Activated naive CD4-positive, alpha-beta T cell treated with anti-CD3 and anti-CD28 coated beads for 36 hours (primary cell): ENCODE measurements at regions of chr10 and their contacts with region 1.

Region 1: GRCh38 chr10:97714048-97714371 is 480 bp downstream of the MARVELD1 start:
- DNase-seq: peak; percentile 65
- H3K4me3 Mint-ChIP-seq: peak overlapping the region; percentile 94
- H3K27ac Mint-ChIP-seq: no peak overlapping the region
- H3K4me1 Mint-ChIP-seq: peaks cover 11% of the 10 kb centered on the region
- H3K27me3 Mint-ChIP-seq: peaks cover 17% of the 10 kb centered on the region

Region 2: GRCh38 chr10:97128516-97129154 is 585.4 kb before region 1 on chr10:
- CTCF ChIA-PET with region 1: no interaction called
- intact Hi-C with region 1: no loop called
- DNase-seq: no peak
- H3K4me3 Mint-ChIP-seq: no peak overlapping the region
- H3K27ac Mint-ChIP-seq: no peak overlapping the region
- H3K4me1 Mint-ChIP-seq: no peaks in the 10 kb centered on the region
- H3K27me3 Mint-ChIP-seq: no peaks in the 10 kb centered on the region

Region 3: DNA sequence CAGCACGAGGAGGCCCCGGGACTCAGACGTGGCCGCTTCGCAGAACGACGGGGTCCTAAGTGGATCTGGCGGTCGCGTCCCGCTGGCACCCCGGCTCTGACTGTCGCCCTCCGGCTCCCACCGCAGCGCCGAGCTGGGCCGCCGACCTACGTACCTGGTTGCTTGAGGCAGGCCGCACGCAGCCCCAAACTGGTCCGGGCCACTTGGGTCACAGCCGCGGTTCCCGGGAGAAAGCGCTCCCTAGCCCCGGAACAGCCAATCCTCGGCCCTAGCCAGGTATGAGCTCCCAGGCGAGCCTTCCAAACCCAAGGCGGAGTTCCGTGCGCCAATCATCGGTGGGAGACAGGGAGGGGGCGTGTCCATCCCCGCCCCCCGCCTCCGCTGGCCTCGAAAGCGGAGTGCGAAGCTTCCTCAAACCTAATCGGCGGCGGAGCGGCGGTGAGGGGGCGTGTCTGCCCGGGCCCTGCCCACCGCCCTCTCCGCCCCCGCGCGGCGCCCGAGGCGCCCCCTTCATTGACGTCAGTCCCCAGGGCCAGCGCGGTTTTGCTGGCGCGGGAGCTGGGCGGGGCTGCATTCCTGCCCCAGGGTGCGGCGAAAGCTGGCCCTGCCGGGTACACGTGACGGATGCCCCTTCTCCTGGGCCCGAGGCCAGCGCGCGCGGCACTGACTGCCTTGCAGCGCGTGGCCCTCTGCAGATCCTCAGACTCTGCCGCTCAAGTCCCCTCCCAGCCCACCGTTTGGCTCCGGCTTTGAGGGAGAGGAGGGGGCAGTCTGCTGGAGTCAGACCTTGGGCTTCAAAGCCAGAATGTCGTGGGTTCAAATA is 26.8 kb before region 1 on chr10 and contains the start of gene AVPI1:
- CTCF ChIA-PET with region 1: interaction called, 42 read pairs
- intact Hi-C with region 1: loop called (anchors 1 kb)
- DNase-seq: peak; percentile 96
- H3K4me3 Mint-ChIP-seq: peak within 1 kb of the TSS; percentile 81
- H3K27ac Mint-ChIP-seq: no peak within 1 kb of the TSS
- H3K4me1 Mint-ChIP-seq: peaks cover 12% of the 10 kb centered on the region
- H3K27me3 Mint-ChIP-seq: no peaks in the 10 kb centered on the region
- total RNA-seq, gene AVPI1: 1.5 to 1.9 TPM

Region 4: DNA sequence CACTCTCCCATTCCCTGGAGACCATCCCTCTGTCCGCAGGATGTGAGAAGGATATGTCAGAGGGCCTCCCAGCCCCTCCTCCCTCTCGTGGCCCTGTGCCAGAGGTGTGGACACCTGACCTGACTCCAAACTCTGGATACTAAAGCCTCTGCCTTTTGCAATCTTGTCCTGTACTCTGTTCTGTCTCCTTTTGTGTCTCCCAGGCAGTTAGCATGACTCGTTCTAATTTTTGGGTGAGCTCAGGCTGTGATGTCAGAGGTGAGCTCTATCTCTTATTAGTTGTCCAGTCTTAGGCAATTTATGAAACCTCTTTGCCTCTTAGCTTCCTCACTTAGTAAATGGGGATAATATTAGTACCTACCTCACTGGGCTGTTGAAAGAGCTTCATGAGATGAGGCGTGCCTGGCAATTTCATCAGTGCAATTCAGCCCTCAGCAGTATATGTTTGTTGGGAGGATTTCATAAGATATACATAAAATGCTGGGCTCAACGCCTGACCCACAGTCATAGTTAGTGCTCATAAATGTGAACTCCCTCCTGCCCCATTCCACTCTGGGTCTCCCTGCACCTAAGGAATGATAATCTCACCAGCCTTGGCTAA is 10.4 kb after region 1 on chr10:
- CTCF ChIA-PET with region 1: interaction called, 173 read pairs
- intact Hi-C with region 1: no loop called
- DNase-seq: no peak
- H3K4me3 Mint-ChIP-seq: no peak overlapping the region
- H3K27ac Mint-ChIP-seq: no peak overlapping the region
- H3K4me1 Mint-ChIP-seq: no peaks in the 10 kb centered on the region
- H3K27me3 Mint-ChIP-seq: no peaks in the 10 kb centered on the region

Region 5: DNA sequence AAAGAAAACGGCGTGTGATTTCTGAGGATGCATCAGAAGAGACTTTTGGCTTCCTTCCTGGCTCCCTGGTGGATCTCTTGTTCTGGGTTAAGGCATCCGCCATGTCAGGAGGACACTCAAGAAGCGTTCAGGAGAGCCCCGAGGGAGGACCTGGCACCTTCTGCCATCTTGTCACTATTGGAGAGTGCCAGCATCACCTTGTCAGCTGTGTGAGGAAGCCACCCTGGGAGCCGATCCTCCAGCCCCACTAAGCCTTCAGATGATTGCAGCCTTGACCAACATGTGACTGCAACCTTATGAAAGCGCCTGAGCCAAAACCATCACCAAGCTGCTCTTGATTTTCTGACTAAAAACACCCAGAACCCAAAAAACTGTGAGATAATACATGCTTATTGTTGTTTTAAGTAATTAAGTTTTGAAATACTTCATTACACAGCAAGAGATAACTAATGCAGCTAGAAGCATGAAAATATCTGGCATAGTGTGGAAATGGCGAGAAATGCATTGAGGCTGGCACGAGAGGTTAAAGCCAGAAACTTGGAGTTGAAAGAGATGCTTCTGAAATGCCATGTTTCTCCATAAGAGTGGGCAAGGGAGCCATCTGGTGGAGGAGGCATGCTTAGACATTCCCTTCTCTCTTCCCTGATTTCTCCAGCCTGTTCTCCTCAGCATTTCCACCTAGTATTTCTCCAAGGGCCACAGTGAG is 17.5 kb after region 1 on chr10:
- CTCF ChIA-PET with region 1: interaction called, 173 read pairs
- intact Hi-C with region 1: loop called (anchors 1 kb)
- DNase-seq: peak; percentile 79
- H3K4me3 Mint-ChIP-seq: no peak overlapping the region
- H3K27ac Mint-ChIP-seq: no peak overlapping the region
- H3K4me1 Mint-ChIP-seq: peaks cover 6% of the 10 kb centered on the region
- H3K27me3 Mint-ChIP-seq: no peaks in the 10 kb centered on the region

Region 6: DNA sequence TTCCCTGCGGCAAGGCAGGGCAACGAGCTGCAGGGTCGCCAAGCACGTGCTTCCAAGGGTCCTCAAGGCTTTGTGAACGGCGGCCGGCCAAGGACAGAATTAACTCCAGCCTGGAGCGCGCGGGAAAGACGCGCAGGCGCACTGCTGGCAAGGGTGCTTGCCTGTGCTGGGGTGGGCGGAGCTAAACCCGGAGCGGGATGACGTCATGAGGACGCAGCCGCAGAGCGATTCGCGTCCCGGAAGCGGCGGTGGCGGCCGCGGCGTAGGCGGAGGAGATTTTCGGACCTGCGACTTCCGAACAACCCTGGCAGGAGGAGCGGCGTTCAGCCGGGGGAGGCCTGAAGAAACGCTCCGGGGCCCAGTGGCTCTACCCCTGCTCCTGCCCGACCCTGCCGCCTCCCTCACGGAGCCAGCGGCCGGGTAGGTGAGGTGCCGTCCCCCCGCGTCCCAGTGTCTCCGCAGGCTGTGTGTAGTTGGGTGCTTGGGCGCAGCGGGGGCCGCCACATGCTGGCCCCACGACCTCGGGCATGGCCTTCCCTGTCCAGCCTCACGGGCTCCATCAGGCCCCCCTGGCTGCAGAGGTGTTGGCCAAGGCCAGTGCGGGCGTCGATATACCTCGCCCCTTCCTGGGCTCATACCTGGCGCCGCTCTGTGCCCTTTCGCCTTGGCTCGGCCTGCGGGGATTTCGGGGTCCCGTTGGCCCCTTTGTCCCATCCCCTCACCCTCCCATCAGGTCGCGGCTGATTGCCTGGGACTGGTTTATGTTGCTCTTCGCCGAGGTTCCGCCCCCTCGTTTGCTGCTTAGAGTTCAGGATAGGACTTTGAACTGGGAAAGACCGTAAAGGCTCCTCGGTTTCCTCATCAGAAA is 23.1 kb after region 1 on chr10 and contains the start of gene ZFYVE27:
- CTCF ChIA-PET with region 1: interaction called, 173 read pairs
- intact Hi-C with region 1: no loop called
- DNase-seq: peak; percentile 98
- H3K4me3 Mint-ChIP-seq: peak within 1 kb of the TSS; percentile 92
- H3K27ac Mint-ChIP-seq: peak within 1 kb of the TSS; percentile 93
- H3K4me1 Mint-ChIP-seq: peaks cover 44% of the 10 kb centered on the region
- H3K27me3 Mint-ChIP-seq: no peaks in the 10 kb centered on the region
- total RNA-seq, gene ZFYVE27: 18.0 to 18.4 TPM

Region 7: DNA sequence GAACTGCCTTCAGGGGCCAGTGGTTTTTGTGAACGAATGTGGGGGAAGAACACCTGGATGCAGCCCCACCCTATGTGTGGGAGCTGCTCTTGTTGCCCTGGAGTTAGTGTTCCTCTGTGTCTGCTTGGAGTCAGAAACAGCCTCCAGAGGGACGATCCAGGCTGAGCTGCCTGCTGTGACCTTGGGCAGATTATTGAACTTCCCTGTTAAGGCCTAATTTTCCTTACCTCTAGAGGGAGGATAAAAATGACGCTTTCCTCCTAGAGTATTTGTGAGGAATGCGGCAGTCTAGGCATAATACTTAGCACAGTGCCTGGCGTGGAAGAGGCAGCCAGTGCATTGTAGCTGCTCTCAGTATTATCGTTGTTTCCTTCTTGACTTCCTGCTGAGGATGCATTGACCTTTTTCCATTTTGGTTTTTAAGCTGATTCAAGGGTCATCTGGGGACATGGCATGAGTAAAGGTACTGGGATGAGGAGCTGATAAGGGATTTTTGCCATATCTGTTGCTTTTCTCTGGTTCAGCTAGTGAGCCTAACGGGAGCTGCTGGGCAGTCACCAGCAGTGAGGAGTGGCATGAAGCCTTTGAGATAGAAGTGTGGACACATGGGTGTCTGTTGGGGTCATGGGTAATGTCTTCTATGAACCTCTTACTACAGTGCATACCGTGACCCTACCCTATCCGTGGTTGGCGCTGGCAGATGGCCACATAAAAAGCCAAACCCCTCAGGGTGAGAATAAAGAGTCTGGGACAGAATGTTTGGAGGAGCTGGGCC is 29.3 kb after region 1 on chr10:
- CTCF ChIA-PET with region 1: interaction called, 12 read pairs
- intact Hi-C with region 1: no loop called
- DNase-seq: no peak
- H3K4me3 Mint-ChIP-seq: no peak overlapping the region
- H3K27ac Mint-ChIP-seq: no peak overlapping the region
- H3K4me1 Mint-ChIP-seq: peaks cover 31% of the 10 kb centered on the region
- H3K27me3 Mint-ChIP-seq: no peaks in the 10 kb centered on the region

Region 8: DNA sequence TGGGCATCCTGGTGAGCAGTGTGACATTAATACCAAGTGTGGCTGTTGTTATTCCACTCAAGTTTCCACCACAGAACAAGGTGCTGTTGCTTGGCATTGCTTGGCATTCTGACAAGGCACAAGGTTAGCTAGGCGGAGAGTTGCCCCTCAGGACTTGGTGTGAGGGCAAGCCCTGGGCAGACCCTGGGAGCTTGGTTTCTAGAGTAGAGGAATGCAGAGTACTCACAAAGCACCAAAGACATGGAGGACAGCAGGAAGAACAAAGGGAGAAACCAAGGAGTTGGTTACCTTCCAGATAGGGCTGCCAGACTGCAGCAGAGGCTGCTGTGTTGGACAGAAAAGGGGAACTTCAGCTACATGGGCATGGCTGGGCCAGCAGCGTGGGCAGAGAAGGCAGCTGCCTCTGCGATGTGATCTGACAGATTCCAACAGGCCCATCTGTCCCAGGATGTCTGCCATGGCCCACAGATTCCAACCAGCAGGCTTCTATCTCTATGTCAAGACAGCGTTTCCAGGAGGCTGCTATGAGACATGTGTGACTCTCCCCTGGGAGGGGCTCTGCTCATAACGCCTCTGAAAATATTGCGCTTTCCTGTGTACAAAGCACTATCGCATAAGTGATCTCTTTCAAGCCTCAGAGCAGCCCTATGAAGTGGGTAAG is 137.5 kb after region 1 on chr10:
- CTCF ChIA-PET with region 1: no interaction called
- intact Hi-C with region 1: no loop called
- DNase-seq: peak; percentile 63
- H3K4me3 Mint-ChIP-seq: no peak overlapping the region
- H3K27ac Mint-ChIP-seq: no peak overlapping the region
- H3K4me1 Mint-ChIP-seq: peaks cover 34% of the 10 kb centered on the region
- H3K27me3 Mint-ChIP-seq: no peaks in the 10 kb centered on the region

Region 9: DNA sequence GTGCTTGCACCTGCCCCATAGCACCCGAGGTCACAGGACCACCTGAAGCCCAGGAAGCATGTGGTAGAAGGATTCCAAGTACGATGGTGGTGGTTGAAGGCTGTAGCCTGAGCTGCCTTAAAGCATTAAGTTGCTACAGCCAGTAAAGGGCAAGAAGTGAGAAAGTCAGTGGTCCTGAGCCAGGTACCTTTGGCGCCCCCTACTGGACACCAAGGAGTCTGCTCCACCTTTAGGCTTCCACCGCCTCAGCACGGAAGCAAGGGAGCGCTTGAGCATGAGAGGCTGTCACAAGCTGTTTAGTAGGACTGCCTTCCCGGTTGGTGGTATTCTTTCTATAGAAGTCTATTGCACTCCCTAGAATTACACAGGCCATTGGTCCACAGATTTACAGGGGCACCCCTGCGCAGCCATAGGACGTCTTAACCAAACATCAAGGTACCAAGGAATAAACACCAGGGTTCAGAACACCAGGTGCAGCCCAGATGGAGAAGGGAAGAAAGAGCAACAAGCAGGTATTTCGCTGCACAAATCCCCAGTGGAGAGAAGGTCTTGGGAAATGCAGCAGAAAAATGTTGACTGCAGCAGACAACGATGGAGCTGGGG is 314.3 kb after region 1 on chr10:
- CTCF ChIA-PET with region 1: no interaction called
- intact Hi-C with region 1: loop called (anchors 5 kb)
- DNase-seq: peak; percentile 83
- H3K4me3 Mint-ChIP-seq: no peak overlapping the region
- H3K27ac Mint-ChIP-seq: no peak overlapping the region
- H3K4me1 Mint-ChIP-seq: peaks cover 4% of the 10 kb centered on the region
- H3K27me3 Mint-ChIP-seq: peaks cover 55% of the 10 kb centered on the region